Calu3 (cell line): ENCODE measurements at regions of chr6 and their contacts with region 1.

Region 1: DNA sequence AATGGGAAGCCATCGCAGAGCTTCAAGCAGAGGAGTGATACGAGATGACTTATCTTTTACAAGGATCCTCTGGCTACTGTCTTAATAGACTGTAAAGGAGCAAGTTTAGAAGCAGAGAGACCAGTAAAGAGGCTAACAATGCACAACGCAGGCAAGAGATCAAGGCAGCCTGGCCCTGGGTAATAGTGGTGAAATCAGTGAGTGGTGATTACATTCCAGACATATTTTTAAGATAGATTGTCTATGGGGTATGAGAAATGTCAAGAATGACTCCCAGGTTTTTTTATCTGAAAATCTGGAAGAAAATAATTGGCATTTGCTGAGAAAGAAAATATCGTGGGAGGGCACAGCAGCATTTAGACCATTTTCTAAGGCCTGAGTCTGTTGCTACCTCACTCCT is 213.6 kb upstream of the HTR1E start:
- DNase-seq: peak; percentile 24
- H3K4me3 Mint-ChIP-seq: peak overlapping the region; percentile 35
- H3K27ac Mint-ChIP-seq: peak overlapping the region; percentile 76
- H3K4me1 Mint-ChIP-seq: peaks cover 42% of the 10 kb centered on the region
- H3K27me3 Mint-ChIP-seq: no peaks in the 10 kb centered on the region
- CTCF ChIP-seq: no peak

Region 2: DNA sequence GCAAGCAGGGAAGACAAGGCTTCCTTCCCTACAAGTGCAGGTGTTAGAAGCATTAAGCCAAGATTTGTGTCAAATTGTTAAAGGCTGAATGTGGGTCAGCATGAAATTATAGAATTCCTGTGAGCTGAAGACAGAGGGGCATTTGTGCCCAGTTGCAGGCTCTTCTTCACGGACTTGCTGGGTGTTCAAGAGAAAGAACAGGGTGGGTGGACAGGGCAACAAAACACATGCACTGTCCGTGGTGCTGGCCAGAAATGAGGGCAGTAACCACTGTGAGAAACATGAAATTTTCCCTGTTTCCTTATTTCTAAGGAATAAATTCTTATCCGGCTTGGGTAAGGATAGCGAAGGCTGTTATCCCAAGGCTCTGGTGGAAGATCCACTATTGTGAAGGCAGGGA is 365.9 kb before region 1 on chr6:
- CTCF ChIA-PET with region 1: no interaction called
- intact Hi-C with region 1: loop called (anchors 5 kb)
- DNase-seq: peak; percentile 12
- H3K4me3 Mint-ChIP-seq: no peak overlapping the region
- H3K27ac Mint-ChIP-seq: no peak overlapping the region
- H3K4me1 Mint-ChIP-seq: peaks cover 44% of the 10 kb centered on the region
- H3K27me3 Mint-ChIP-seq: no peaks in the 10 kb centered on the region
- CTCF ChIP-seq: no peak

Region 3: DNA sequence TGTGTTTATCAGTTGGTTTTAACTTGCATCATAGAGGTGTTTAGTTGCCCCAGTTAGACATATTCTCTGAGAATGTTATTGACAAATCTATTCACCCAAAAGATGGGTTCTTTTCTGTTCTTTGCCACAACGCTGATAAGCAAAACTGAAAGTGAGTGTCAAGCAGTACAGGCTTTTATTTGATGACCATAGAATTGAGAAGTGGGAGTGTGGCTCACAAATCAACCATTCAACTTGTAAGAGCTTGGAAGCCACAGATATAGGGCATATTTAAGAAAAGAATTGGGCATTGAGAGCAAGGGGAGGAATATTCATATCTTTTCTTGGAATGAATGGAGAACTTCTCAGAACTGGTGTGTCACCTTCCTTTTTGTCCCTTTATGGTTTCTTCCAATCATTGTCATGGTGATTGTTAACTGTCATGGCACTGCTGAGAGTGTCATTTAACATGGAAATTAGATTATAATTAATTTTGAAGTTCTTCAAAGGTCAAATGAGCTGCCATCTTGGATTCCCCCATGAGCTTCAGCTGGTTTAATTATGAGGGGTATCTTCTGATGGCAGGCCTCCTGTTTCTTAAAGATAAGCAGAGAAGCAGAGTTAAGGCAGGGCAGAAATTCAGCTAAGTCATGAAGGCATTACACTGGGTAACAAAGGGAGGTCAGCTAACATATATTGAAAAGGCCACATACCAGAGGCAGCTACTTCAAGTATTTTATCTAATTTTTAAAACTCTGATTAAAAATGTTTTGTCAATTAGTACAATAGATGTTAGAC is 40.4 kb before region 1 on chr6:
- CTCF ChIA-PET with region 1: no interaction called
- intact Hi-C with region 1: no loop called
- DNase-seq: no peak
- H3K4me3 Mint-ChIP-seq: no peak overlapping the region
- H3K27ac Mint-ChIP-seq: no peak overlapping the region
- H3K4me1 Mint-ChIP-seq: no peaks in the 10 kb centered on the region
- H3K27me3 Mint-ChIP-seq: no peaks in the 10 kb centered on the region
- CTCF ChIP-seq: no peak